Aorta (tissue), 5 donors: ENCODE measurements at regions of chr2 and their contacts with region 1.

Region 1: DNA sequence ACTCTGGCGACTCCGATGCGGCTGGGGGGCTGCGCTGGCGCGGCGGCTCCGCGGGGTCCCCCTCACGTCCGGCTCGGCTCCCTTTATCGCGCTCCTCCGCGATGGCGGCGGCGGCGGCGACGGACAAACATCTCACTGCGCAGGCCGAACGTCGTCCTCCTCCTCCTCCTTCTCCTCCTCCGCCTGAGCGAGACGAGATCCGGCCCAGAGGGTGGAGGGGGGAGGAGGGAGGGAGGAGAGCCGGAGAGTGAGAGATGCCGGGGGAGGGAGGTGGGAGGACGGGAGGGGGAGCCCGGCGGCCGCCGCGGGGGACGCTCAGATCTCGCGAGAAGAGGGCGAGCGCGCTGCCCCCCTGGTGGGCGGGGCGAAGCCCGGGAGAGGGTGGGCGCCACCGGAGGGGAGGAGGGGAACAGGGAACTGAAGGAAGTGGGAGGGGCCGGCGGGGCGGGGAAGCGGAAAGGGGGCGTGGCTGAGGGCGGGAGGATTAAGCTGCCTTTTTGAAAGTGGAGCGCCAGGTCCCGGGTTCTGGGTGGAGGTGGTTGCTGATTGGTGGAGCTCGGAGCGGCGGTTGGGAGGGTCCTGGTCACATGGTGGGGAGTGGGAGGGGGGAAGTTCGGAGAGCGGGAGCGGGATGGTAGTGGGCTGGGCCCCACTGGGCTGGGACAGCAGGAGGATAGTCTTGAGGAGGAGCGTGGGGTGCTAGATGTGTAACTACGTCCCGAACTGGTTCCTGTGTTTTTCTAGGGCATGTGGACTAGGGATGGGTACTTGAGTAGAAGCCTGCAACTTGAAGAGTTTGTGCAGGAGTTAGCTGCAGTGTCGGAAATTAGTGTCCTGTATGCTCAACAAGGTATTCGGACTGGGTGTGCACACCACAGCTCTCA is at the start of gene CUL3:
- DNase-seq: peak; percentile 99 to 100
- ATAC-seq: peak; percentile 100
- H3K4me3 ChIP-seq: peak within 1 kb of the TSS; percentile 86 to 95
- H3K27ac ChIP-seq: peak within 1 kb of the TSS; percentile 81 to 85
- H3K4me1 ChIP-seq: no peaks in the 10 kb centered on the region
- H3K27me3 ChIP-seq: no peaks in the 10 kb centered on the region
- total RNA-seq, gene CUL3: 65.1 to 72.4 TPM

Region 2: GRCh38 chr2:224479826-224480225 is 105.6 kb before region 1 on chr2:
- intact Hi-C with region 1: loop called in 1 of 2 experiments (anchors 10 kb)
- DNase-seq: no peak
- ATAC-seq: no peak
- H3K4me3 ChIP-seq: no peak overlapping the region
- H3K27ac ChIP-seq: no peak overlapping the region
- H3K4me1 ChIP-seq: peaks cover 0 to 2% of the 10 kb centered on the region in 2 donors
- H3K27me3 ChIP-seq: no peaks in the 10 kb centered on the region

Region 3: GRCh38 chr2:224520064-224520463 is 65.4 kb before region 1 on chr2:
- intact Hi-C with region 1: loop called in 1 of 2 experiments (anchors 10 kb)
- DNase-seq: no peak
- ATAC-seq: no peak
- H3K4me3 ChIP-seq: no peak overlapping the region
- H3K27ac ChIP-seq: peak overlapping the region in 1 of 2 donors; percentile 57
- H3K4me1 ChIP-seq: peaks cover 6 to 8% of the 10 kb centered on the region in 2 donors
- H3K27me3 ChIP-seq: no peaks in the 10 kb centered on the region

Region 4: GRCh38 chr2:225296951-225297350 is 711.5 kb after region 1 on chr2:
- intact Hi-C with region 1: no loop called
- DNase-seq: no peak
- ATAC-seq: no peak
- H3K4me3 ChIP-seq: no peak overlapping the region
- H3K27ac ChIP-seq: no peak overlapping the region
- H3K4me1 ChIP-seq: no peaks in the 10 kb centered on the region
- H3K27me3 ChIP-seq: no peaks in the 10 kb centered on the region